ENCODE measurements at regions of chr4 and their contacts with region 1.

Region 1: DNA sequence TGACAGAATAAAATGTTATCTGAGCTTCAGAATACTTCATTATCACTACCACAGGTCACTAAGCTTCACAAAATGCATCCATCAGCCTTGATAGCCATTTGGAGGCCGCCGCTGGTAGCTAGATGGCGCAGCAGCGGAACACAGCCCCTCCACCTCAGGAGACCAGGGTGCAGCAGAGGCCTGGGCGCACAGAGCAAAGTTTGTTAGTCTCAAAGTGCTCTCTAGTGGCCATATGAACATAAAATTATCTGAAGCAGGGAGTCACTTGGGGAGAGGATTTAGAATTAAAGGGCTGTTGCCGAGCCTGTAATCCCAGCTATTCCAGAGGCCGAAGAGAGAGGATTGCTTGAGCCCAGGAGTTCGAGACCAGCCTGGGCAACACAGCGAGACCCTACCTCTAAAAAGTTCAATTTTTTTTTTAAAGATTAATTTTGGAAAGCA is 8.1 kb upstream of the DCTD start:
- DNase-seq: peak; percentile 83
- ATAC-seq: peak; percentile 100
- H3K4me3 ChIP-seq: no peak overlapping the region
- H3K4me3 Mint-ChIP-seq: no peak overlapping the region
- H3K27ac ChIP-seq: no peak overlapping the region
- H3K27ac Mint-ChIP-seq: no peak overlapping the region
- H3K4me1 ChIP-seq: no peaks in the 10 kb centered on the region
- H3K4me1 Mint-ChIP-seq: no peaks in the 10 kb centered on the region
- H3K27me3 ChIP-seq: peaks cover 0 to 11% (median 6%) of the 10 kb centered on the region in 4 experiments
- H3K27me3 Mint-ChIP-seq: peaks cover 22% of the 10 kb centered on the region
- CTCF ChIP-seq: peak; percentile 71

Region 2: DNA sequence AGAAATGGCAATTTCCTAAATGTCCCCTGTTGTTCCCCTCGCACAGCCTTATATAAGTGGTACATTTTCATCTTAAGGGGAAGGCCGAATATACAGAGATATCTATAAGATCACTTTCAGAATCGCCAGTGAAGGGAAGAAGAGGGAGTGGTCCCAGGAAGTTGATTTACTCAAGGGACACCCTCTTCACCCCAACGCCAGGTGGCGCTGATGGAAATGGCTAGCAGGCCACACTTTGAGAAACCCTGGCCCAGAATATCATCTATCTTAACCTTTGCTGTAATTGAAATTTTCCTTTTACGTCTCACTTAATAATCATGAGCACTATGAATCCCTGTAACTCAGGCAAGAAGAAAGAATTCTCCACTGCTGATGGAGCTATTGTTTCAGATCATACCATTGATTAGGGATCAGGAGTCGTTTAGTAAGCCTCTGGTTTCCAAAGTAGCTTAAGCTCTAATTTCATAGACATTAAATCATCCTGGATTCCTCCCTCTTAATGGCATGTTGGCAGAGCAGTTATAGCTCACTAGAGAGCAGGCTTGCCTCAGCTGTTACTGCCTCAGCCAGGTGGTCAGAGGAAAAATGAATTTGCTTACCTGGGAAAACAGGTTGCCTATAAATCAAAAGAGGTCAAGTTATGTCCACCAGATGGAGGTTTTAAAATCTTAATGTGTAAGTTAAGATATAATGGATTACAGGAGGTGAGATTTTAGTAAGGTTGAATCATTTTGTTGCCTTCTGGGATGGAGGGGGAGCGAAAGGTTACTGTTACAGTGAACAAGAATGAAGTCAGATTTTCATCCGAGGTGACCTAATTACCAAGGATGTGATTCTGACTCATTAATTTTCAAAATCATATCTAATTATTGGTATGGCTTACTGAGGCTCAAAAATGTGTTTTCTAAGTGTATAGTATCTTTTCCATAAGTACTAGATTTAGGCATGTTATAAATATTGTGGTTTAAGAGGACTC is 1623.3 kb before region 1 on chr4:
- CTCF ChIA-PET with region 1: no interaction called
- POLR2A ChIA-PET with region 1: no interaction called
- intact Hi-C with region 1: loop called (anchors 10 kb)
- DNase-seq: peak; percentile 13
- ATAC-seq: no peak
- H3K4me3 ChIP-seq: no peak overlapping the region
- H3K4me3 Mint-ChIP-seq: no peak overlapping the region
- H3K27ac ChIP-seq: no peak overlapping the region
- H3K27ac Mint-ChIP-seq: no peak overlapping the region
- H3K4me1 ChIP-seq: no peaks in the 10 kb centered on the region
- H3K4me1 Mint-ChIP-seq: no peaks in the 10 kb centered on the region
- H3K27me3 ChIP-seq: no peaks in the 10 kb centered on the region
- H3K27me3 Mint-ChIP-seq: no peaks in the 10 kb centered on the region
- CTCF ChIP-seq: peak; percentile 42

Region 3: GRCh38 chr4:182478475-182478874 is 446.8 kb before region 1 on chr4:
- CTCF ChIA-PET with region 1: interaction called, 17 read pairs
- POLR2A ChIA-PET with region 1: no interaction called
- intact Hi-C with region 1: no loop called
- DNase-seq: peak; percentile 33
- ATAC-seq: no peak
- H3K4me3 ChIP-seq: no peak overlapping the region
- H3K4me3 Mint-ChIP-seq: no peak overlapping the region
- H3K27ac ChIP-seq: no peak overlapping the region
- H3K27ac Mint-ChIP-seq: no peak overlapping the region
- H3K4me1 ChIP-seq: no peaks in the 10 kb centered on the region
- H3K4me1 Mint-ChIP-seq: no peaks in the 10 kb centered on the region
- H3K27me3 ChIP-seq: peaks cover 0 to 5% (median 0%) of the 10 kb centered on the region in 4 experiments
- H3K27me3 Mint-ChIP-seq: peaks cover 15% of the 10 kb centered on the region
- CTCF ChIP-seq: peak; percentile 87

Region 4: DNA sequence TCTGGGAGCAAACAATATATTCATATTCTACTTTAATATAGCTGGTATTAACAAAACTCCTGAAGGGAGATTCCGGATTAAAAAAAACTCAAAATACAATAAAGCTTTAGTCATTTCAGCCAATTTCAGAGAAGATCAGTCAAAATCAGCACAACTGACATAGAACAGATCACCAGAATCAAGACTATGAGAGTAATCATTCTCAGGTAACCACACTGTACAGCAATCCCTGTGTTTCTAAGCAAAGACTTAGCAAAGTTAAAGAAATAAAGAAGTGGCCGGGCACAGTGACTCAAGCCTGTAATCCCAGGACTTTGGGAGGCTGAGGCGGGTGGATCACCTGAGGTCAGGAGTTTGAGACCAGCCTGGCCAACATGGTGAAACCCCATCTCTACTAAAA is 17.2 kb before region 1 on chr4:
- CTCF ChIA-PET with region 1: interaction called, 27 read pairs
- POLR2A ChIA-PET with region 1: no interaction called
- intact Hi-C with region 1: no loop called
- DNase-seq: no peak
- ATAC-seq: no peak
- H3K4me3 ChIP-seq: no peak overlapping the region
- H3K4me3 Mint-ChIP-seq: no peak overlapping the region
- H3K27ac ChIP-seq: no peak overlapping the region
- H3K27ac Mint-ChIP-seq: no peak overlapping the region
- H3K4me1 ChIP-seq: no peaks in the 10 kb centered on the region
- H3K4me1 Mint-ChIP-seq: peaks cover under 1% of the 10 kb centered on the region
- H3K27me3 ChIP-seq: no peaks in the 10 kb centered on the region
- H3K27me3 Mint-ChIP-seq: no peaks in the 10 kb centered on the region
- CTCF ChIP-seq: no peak